Right cardiac atrium (tissue), 5 donors: ENCODE measurements at regions of chr18 and their contacts with region 1.

Region 1: DNA sequence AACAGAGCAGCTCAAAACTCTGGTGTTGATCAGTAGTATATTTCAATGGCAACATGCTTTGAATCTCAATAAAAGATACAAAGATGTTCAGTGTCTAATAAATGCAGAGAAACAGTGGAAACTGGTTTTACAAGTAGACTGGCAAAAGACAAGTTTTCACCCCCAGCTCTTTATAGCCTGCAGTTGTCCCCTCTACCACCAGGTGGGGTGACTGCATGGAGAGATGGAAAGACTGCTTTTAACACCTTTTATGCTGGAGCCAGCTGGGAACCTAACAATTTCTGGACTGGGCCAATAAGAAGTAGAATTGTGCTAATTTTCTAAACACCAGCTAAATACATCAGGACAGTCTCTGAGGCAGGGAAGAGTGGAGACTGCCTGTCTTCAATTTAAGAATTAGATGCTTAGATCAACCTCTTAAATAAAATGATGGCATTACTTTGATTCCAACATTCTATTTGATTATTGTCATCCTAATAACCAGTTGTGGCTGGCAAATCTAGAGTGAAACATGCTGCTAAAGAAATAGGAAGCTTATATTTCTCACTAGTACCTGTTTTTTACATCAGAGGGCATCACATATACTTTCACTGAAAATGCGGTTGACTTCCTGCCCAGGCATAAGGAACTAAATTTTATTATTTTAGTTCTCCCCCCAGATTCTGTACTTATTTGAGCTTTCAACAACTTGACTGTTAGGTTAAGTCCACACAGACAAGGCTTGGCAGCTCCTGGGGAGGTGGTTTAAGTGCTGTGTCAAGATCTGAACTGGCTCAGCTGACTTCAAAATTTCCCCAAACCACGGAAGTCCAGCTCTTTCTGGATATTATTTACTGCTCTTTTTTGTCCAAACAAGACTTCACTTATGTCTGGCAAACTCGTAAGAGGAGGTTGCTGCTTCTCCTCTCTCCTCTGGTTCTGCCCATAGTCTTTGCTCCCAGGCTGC is 140.5 kb downstream of the TPGS2 start:
- DNase-seq: peak in 2 of 3 donors; percentile 45 to 62
- ATAC-seq: peak; percentile 55 to 62
- H3K4me3 ChIP-seq: no peak overlapping the region
- H3K27ac ChIP-seq: no peak overlapping the region
- H3K4me1 ChIP-seq: no peaks in the 10 kb centered on the region
- H3K27me3 ChIP-seq: no peaks in the 10 kb centered on the region

Region 2: DNA sequence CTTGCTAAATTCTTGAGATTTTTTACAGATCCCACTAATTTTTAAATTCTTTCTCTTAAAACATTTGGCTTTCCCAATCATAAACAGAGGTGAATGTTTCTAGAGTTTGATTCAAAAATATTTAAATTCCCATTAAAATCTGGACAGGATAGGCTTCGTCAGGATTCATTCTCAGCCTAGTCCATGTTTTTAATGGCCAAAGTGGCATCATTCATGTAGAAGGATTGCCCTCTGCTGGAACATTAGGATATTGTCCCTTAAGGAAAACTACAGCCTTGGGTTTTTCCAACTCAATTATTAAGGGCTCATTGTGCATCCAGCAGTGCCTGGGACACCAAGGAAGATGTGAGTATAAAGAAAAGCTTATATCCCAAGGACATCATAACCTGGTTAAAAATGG is 68.8 kb after region 1 on chr18:
- intact Hi-C with region 1: loop called (anchors 5 to 10 kb)
- DNase-seq: no peak
- ATAC-seq: peak in 1 of 2 donors; percentile 70
- H3K4me3 ChIP-seq: no peak overlapping the region
- H3K27ac ChIP-seq: no peak overlapping the region
- H3K4me1 ChIP-seq: no peaks in the 10 kb centered on the region
- H3K27me3 ChIP-seq: no peaks in the 10 kb centered on the region

Region 3: GRCh38 chr18:36809590-36810381 is 121.5 kb after region 1 on chr18:
- intact Hi-C with region 1: loop called in 1 of 4 experiments (anchors 5 kb)
- DNase-seq: peak in 2 of 3 donors; percentile 20 to 39
- ATAC-seq: peak; percentile 63 to 73
- H3K4me3 ChIP-seq: no peak overlapping the region
- H3K27ac ChIP-seq: no peak overlapping the region
- H3K4me1 ChIP-seq: no peaks in the 10 kb centered on the region
- H3K27me3 ChIP-seq: no peaks in the 10 kb centered on the region